ENCODE measurements at regions of chr4 and their contacts with region 1.

Region 1: DNA sequence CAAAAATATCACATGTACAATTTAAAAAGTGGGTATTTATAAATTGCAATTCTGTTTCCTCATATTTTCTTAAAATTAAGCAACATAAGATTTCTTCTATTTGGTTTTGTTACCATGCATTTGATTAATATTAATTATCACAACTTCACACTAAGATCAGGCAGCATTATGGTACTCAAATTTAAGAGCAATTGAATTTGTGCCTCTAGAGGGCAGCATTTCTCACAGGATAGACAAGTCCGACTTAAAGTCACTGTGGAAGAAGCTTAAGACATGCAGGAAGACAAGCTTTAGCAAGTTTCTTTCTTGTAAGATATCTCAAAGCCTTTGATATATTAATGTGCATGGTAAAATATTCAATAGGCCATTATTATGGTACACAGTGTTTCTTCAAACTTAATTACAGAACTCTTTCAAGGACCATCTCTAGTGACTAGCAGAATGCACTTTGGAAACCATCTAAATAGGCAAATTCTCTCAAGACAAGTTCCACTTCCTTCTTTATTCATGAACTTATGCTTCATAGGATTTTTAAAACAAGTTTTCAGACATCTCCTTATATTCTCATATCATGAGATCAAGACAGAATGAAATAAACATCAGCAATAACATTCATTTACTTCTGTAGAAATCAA is 35.0 kb downstream of the FBXW7 start:
- DNase-seq: peak; percentile 63
- ATAC-seq: peak; percentile 67
- H3K4me3 Mint-ChIP-seq: no peak overlapping the region
- H3K27ac Mint-ChIP-seq: no peak overlapping the region
- H3K4me1 Mint-ChIP-seq: peaks cover 26% of the 10 kb centered on the region
- H3K27me3 Mint-ChIP-seq: no peaks in the 10 kb centered on the region

Region 2: GRCh38 chr4:152448854-152449253 is 52.1 kb before region 1 on chr4:
- CTCF ChIA-PET with region 1: interaction called, 24 read pairs
- POLR2A ChIA-PET with region 1: no interaction called
- intact Hi-C with region 1: loop called in 1 of 2 experiments (anchors 1 kb)
- DNase-seq: no peak
- ATAC-seq: no peak
- H3K4me3 Mint-ChIP-seq: no peak overlapping the region
- H3K27ac Mint-ChIP-seq: no peak overlapping the region
- H3K4me1 Mint-ChIP-seq: peaks cover 9% of the 10 kb centered on the region
- H3K27me3 Mint-ChIP-seq: no peaks in the 10 kb centered on the region

Region 3: DNA sequence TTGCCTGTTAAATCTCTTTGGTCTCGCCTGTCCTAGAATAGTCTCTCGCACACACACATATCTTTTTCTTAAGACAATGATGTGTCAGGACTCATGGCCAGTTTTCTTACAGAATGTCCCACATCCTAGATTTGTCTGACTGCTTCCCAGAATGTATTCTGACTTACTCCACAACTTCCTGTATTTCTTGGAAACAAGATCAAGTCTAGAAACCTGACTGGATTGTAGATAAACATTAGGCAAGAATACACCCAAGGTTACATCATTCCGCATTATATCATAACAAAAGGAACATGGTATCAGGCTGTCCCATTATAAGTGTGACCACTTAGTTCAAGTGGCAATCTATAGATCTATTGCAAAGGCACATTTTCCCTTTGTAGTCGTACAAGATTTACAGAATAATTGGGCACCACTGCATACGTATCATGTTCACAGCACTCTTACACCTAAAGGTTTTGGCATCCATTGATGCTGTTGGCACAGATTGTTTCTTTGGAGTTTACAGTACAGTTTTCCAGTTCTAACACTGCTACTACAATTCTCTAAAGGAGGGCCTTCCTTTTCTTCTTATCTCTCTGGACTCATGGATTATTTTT is 21.4 kb before region 1 on chr4:
- CTCF ChIA-PET with region 1: interaction called, 10 read pairs
- POLR2A ChIA-PET with region 1: interaction called, 3 read pairs
- intact Hi-C with region 1: no loop called
- DNase-seq: no peak
- ATAC-seq: no peak
- H3K4me3 Mint-ChIP-seq: no peak overlapping the region
- H3K27ac Mint-ChIP-seq: no peak overlapping the region
- H3K4me1 Mint-ChIP-seq: peaks cover 22% of the 10 kb centered on the region
- H3K27me3 Mint-ChIP-seq: no peaks in the 10 kb centered on the region

Region 4: GRCh38 chr4:152525873-152526272 is 25.0 kb after region 1 on chr4:
- CTCF ChIA-PET with region 1: interaction called, 25 read pairs
- POLR2A ChIA-PET with region 1: no interaction called
- intact Hi-C with region 1: no loop called
- DNase-seq: no peak
- ATAC-seq: no peak
- H3K4me3 Mint-ChIP-seq: no peak overlapping the region
- H3K27ac Mint-ChIP-seq: no peak overlapping the region
- H3K4me1 Mint-ChIP-seq: peaks cover 69% of the 10 kb centered on the region
- H3K27me3 Mint-ChIP-seq: no peaks in the 10 kb centered on the region

Region 5: GRCh38 chr4:152628128-152628527 is 127.2 kb after region 1 on chr4:
- CTCF ChIA-PET with region 1: interaction called, 28 read pairs
- POLR2A ChIA-PET with region 1: no interaction called
- intact Hi-C with region 1: no loop called
- DNase-seq: no peak
- ATAC-seq: no peak
- H3K4me3 Mint-ChIP-seq: no peak overlapping the region
- H3K27ac Mint-ChIP-seq: no peak overlapping the region
- H3K4me1 Mint-ChIP-seq: no peaks in the 10 kb centered on the region
- H3K27me3 Mint-ChIP-seq: no peaks in the 10 kb centered on the region

Region 6: GRCh38 chr4:152735396-152735859 is 234.5 kb after region 1 on chr4:
- CTCF ChIA-PET with region 1: interaction called, 54 read pairs
- POLR2A ChIA-PET with region 1: no interaction called
- intact Hi-C with region 1: loop called (anchors 1 to 2 kb)
- DNase-seq: no peak
- ATAC-seq: no peak
- H3K4me3 Mint-ChIP-seq: no peak overlapping the region
- H3K27ac Mint-ChIP-seq: no peak overlapping the region
- H3K4me1 Mint-ChIP-seq: peaks cover 2% of the 10 kb centered on the region
- H3K27me3 Mint-ChIP-seq: peaks cover 3% of the 10 kb centered on the region

Region 7: DNA sequence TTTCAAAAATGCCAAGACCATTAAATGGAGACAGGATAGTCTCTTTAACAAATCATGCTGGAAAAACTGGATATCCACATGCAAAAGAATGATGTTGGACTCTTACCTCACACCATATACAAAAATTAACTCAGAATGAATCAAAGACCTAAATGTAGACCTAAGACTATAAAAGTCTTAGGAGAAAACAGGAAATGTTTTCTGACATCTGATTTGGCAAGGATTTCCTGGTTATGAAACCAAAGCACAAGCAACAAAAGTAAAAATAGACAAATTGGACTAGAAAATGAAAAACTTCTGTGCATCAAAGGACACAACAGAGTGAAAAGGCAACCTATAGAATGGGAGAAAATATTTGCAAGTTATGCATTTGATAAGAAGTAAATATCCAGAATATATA is 316.4 kb after region 1 on chr4:
- CTCF ChIA-PET with region 1: no interaction called
- POLR2A ChIA-PET with region 1: no interaction called
- intact Hi-C with region 1: no loop called
- DNase-seq: no peak
- ATAC-seq: no peak
- H3K4me3 Mint-ChIP-seq: no peak overlapping the region
- H3K27ac Mint-ChIP-seq: no peak overlapping the region
- H3K4me1 Mint-ChIP-seq: peaks cover 11% of the 10 kb centered on the region
- H3K27me3 Mint-ChIP-seq: no peaks in the 10 kb centered on the region

Region 8: GRCh38 chr4:154082760-154083535 is 1582.0 kb after region 1 on chr4:
- CTCF ChIA-PET with region 1: no interaction called
- POLR2A ChIA-PET with region 1: no interaction called
- intact Hi-C with region 1: no loop called
- DNase-seq: peak; percentile 25
- ATAC-seq: peak; percentile 61
- H3K4me3 Mint-ChIP-seq: no peak overlapping the region
- H3K27ac Mint-ChIP-seq: no peak overlapping the region
- H3K4me1 Mint-ChIP-seq: no peaks in the 10 kb centered on the region
- H3K27me3 Mint-ChIP-seq: peaks cover 10% of the 10 kb centered on the region